H1 (cell line): ENCODE measurements at regions of chr20 and their contacts with region 1.

Region 1: DNA sequence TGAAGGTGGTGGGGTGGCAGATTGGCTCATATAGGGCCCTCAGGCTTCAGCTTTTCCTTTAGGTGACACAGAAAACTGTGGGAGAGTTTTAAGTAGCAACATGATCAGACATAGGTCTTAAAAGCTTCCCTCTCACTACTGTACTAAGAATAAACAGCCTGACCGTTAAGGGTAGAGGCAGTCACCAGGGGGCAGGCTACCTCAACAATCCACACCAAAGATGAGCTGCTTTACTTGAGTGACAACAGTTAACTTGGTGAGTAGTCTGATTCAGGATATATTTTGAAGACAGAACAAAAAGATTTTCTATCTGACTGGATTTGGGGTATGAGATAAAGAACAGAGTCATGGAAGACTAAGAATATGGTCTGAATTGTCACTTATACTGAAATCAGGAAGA is 193.1 kb upstream of the SHLD1 start:
- DNase-seq: peak; percentile 10 to 75
- H3K4me3 ChIP-seq: no peak overlapping the region
- H3K27ac ChIP-seq: no peak overlapping the region
- H3K4me1 ChIP-seq: peaks cover 0 to 3% (median 0%) of the 10 kb centered on the region in 4 experiments; a peak in 1 of 7 replicates
- H3K27me3 ChIP-seq: no peaks in the 10 kb centered on the region
- CTCF ChIP-seq: peak; percentile 41 to 76 (median 76)
- EP300 ChIP-seq: no peak
- POLR2A ChIP-seq: no peak
- RAD21 ChIP-seq: peak; percentile 86

Region 2: GRCh38 chr20:5513975-5514516 is 43.1 kb before region 1 on chr20:
- CTCF ChIA-PET with region 1: no interaction called
- POLR2A ChIA-PET with region 1: no interaction called
- DNase-seq: no peak
- H3K4me3 ChIP-seq: no peak overlapping the region
- H3K27ac ChIP-seq: no peak overlapping the region
- H3K4me1 ChIP-seq: peaks cover 0 to 6% (median 2%) of the 10 kb centered on the region in 4 experiments; a peak in 3 of 7 replicates
- H3K27me3 ChIP-seq: no peaks in the 10 kb centered on the region
- CTCF ChIP-seq: no peak
- EP300 ChIP-seq: no peak
- POLR2A ChIP-seq: no peak
- RAD21 ChIP-seq: no peak

Region 3: GRCh38 chr20:5535125-5535771 is 21.9 kb before region 1 on chr20:
- CTCF ChIA-PET with region 1: interaction called, 13 read pairs
- POLR2A ChIA-PET with region 1: no interaction called
- DNase-seq: no peak
- H3K4me3 ChIP-seq: no peak overlapping the region
- H3K27ac ChIP-seq: no peak overlapping the region
- H3K4me1 ChIP-seq: no peaks in the 10 kb centered on the region
- H3K27me3 ChIP-seq: no peaks in the 10 kb centered on the region
- CTCF ChIP-seq: no peak
- EP300 ChIP-seq: no peak
- POLR2A ChIP-seq: no peak
- RAD21 ChIP-seq: no peak

Region 4: GRCh38 chr20:5569021-5569420 is 11.9 kb after region 1 on chr20:
- CTCF ChIA-PET with region 1: interaction called, 39 read pairs
- POLR2A ChIA-PET with region 1: no interaction called
- DNase-seq: no peak
- H3K4me3 ChIP-seq: no peak overlapping the region
- H3K27ac ChIP-seq: no peak overlapping the region
- H3K4me1 ChIP-seq: no peaks in the 10 kb centered on the region
- H3K27me3 ChIP-seq: no peaks in the 10 kb centered on the region
- CTCF ChIP-seq: peak in 1 of 3 experiments; percentile 8; a peak in 1 of 4 replicates
- EP300 ChIP-seq: no peak
- POLR2A ChIP-seq: no peak
- RAD21 ChIP-seq: peak; percentile 33 to 49; a peak in 3 of 4 replicates

Region 5: GRCh38 chr20:5602346-5602745 is 45.2 kb after region 1 on chr20:
- CTCF ChIA-PET with region 1: no interaction called
- POLR2A ChIA-PET with region 1: no interaction called
- DNase-seq: no peak
- H3K4me3 ChIP-seq: no peak overlapping the region
- H3K27ac ChIP-seq: no peak overlapping the region
- H3K4me1 ChIP-seq: peaks cover 0 to 4% (median 2%) of the 10 kb centered on the region in 4 experiments; a peak in 3 of 7 replicates
- H3K27me3 ChIP-seq: no peaks in the 10 kb centered on the region
- CTCF ChIP-seq: no peak
- EP300 ChIP-seq: no peak
- POLR2A ChIP-seq: no peak
- RAD21 ChIP-seq: no peak

Region 6: DNA sequence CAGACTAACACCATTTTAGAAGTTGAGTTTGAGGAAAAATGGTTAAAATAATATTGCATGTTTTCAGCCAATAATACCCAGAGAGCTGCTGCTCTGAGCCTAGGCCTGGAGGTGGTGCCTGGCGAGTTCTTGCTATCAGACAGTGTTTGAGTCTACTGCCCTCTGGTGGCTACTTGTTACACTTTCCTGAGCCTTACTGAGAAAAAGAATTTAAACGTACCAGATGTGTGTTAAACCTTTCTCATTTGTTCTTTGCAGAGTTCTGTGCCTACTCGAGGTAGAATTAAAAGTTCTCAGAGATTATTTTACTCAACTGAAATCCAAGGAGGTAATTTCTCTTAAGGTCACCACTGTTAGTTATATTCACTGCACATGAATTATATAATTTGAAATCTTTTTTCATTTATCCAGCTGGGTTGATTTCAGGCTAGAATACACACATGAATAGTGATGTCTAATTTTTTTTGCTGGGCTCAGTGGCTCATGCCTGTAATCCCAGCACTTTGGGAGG is 231.3 kb after region 1 on chr20:
- CTCF ChIA-PET with region 1: interaction called, 38 read pairs
- POLR2A ChIA-PET with region 1: no interaction called
- DNase-seq: peak; percentile 33 to 59
- H3K4me3 ChIP-seq: no peak overlapping the region
- H3K27ac ChIP-seq: no peak overlapping the region
- H3K4me1 ChIP-seq: peaks cover 0 to 4% (median 1%) of the 10 kb centered on the region in 4 experiments; a peak in 2 of 7 replicates
- H3K27me3 ChIP-seq: no peaks in the 10 kb centered on the region
- CTCF ChIP-seq: peak; percentile 48 to 97 (median 82)
- EP300 ChIP-seq: no peak
- POLR2A ChIP-seq: no peak
- RAD21 ChIP-seq: peak; percentile 93 to 95